Left ventricle myocardium inferior (tissue), 1 donor: ENCODE measurements at regions of chr18 and their contacts with region 1.

Region 1: GRCh38 chr18:47313901-47314300 is 62.4 kb upstream of the SKOR2 start:
- DNase-seq: no peak
- H3K4me3 ChIP-seq: no peak overlapping the region
- H3K27ac ChIP-seq: no peak overlapping the region
- H3K4me1 ChIP-seq: no peaks in the 10 kb centered on the region
- H3K27me3 ChIP-seq: peaks cover 69% of the 10 kb centered on the region
- CTCF ChIP-seq: no peak

Region 2: GRCh38 chr18:47370052-47370451 is 56.2 kb after region 1 on chr18:
- intact Hi-C with region 1: loop called (anchors 10 kb)
- DNase-seq: no peak
- H3K4me3 ChIP-seq: no peak overlapping the region
- H3K27ac ChIP-seq: no peak overlapping the region
- H3K4me1 ChIP-seq: no peaks in the 10 kb centered on the region
- H3K27me3 ChIP-seq: peaks cover 39% of the 10 kb centered on the region
- CTCF ChIP-seq: no peak